PC-9 (cell line): ENCODE measurements at regions of chr1 and their contacts with region 1.

Region 1: DNA sequence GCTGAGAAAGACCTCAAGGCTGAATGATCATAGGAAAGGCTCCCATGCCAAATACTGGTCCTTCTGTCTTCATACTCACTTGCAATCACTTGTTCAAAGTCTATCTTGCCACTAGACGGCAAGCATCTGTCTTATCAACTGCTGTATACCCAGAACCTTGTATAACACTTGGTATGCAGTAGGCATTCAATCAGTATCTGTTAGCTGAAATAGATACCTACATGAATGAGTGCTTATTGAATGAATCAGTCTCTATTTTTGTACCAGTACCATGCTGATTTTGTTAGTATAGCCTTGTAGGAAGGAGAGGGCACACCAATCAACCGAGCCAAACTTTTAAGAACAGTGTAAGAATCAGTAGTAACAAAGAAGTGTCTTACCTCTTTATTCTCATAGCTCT is 80.6 kb downstream of the NIBAN1 start:
- DNase-seq: no peak
- H3K4me3 ChIP-seq: no peak overlapping the region
- H3K27ac ChIP-seq: no peak overlapping the region
- H3K4me1 ChIP-seq: 0 out of 2 replicates have a peak, but pooled peaks cover under 1% of the 10 kb centered on the region
- H3K27me3 ChIP-seq: no peaks in the 10 kb centered on the region
- CTCF ChIP-seq: no peak

Region 2: DNA sequence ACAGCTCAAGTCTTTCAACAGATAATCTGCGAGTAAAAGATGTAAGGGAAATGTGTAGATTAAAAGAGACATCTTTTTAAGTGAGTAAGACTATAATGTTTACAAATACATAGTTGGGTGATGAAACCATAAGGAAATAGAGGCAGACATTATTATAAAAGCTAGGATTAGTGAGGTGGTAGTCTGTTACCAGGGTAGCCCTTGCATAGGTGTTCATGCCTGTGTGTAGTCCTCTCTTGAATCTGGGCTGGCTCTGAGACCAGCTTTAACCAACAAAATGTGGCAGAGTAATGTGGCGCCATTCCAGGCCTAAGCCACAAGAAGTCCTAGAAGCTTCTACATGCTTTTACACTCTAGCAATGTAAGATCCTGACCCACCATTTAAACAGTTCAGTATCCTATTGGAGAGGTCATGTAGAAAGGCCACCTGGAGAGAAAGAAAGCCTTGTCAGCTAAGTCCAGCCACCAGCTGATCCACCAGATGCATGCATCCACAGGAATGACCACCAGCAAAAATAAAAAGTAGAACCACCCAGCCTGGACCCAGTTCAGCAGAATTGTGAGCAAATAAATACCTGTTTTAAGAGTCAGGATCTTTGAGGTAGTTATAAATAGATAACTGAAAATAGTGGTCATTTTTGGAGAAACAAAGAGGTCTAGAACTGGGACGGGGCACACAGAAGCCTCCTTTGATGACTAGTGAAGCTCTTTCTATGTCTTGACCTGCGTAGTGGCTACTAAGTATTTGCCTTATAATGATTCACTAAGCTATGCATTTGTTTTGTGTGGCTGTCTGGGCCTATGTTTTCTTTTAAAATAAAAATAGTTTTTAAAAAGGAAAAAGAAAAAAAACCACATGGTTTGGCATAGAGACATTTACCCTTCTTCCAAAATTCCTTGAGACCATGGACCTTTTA is 72.5 kb after region 1 on chr1:
- CTCF ChIA-PET with region 1: no interaction called
- POLR2A ChIA-PET with region 1: interaction called, 12 read pairs
- intact Hi-C with region 1: no loop called
- DNase-seq: no peak
- H3K4me3 ChIP-seq: no peak overlapping the region
- H3K27ac ChIP-seq: no peak overlapping the region
- H3K4me1 ChIP-seq: 0 out of 2 replicates have a peak, but pooled peaks cover 4% of the 10 kb centered on the region
- H3K27me3 ChIP-seq: no peaks in the 10 kb centered on the region
- CTCF ChIP-seq: no peak